ENCODE measurements at regions of chr3 and their contacts with region 1.

Region 1: GRCh38 chr3:36868614-36869436 is 76.0 kb downstream of the TRANK1 start:
- DNase-seq: no peak

Region 2: GRCh38 chr3:35954413-35954812 is 914.4 kb before region 1 on chr3:
- intact Hi-C with region 1: loop called in 1 of 2 experiments (anchors 5 kb)
- DNase-seq: no peak

Region 3: DNA sequence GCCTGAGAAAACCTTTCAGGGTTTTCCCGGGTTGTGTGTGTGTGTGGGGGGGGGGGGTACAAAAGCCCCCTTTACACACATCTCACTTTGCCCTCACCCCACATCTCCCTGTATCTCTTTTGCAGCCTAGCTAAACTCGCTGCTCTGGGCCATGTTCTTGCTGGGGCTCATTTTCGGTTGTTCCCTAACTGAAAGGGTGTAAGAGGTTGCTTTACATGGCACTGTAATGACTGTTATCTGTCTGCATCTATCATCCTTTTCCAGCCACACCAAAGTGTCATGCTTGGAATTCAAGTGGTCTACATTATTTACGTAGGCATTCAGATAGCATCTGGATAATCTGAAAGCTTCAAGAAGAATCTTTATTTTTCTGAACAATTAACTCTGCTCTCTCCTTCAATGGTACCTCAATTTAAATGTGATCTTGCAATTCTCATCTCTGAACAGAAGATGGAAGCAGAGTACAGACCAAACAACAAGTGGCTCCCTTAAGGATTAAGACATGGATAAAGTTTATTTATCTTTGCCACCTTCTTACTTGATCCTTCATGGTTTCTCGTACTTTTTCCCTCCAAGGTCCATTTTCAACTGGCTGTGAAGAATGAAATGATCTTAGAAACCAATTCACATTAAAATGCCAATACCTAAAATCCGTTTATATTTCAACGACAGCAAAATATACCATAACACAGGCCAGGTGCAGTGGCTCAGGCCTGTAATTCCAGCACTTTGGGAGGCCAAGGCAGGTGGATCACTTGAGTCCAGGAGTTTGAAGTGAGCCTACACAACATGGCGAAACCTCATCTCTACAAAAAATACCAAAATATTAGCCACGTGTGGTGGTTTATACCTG is 139.4 kb before region 1 on chr3:
- intact Hi-C with region 1: loop called in 1 of 2 experiments (anchors 5 kb)
- DNase-seq: no peak

Region 4: DNA sequence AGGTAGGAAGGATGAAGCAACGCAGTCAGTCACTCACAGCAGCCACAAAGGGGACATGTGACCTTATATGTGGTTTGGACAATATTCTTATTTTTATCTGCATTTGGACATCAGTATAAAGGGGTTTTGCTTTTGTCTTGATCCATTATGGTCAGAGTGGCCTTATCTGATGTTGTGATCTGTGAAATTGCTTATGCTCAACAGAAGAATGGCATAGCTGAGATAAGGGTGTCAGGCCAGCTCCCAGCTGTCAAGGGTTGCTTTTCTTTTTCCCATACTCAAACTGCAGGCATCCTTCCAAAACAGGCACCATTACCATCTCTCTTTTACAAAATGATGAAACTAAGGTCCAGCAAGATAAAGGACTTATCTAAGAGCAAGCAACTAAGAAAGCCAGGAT is 132.5 kb before region 1 on chr3:
- intact Hi-C with region 1: loop called in 1 of 2 experiments (anchors 2 kb)
- DNase-seq: no peak